Common myeloid progenitor, CD34-positive (primary cell): ENCODE measurements at regions of chr1 and their contacts with region 1.

Region 1: DNA sequence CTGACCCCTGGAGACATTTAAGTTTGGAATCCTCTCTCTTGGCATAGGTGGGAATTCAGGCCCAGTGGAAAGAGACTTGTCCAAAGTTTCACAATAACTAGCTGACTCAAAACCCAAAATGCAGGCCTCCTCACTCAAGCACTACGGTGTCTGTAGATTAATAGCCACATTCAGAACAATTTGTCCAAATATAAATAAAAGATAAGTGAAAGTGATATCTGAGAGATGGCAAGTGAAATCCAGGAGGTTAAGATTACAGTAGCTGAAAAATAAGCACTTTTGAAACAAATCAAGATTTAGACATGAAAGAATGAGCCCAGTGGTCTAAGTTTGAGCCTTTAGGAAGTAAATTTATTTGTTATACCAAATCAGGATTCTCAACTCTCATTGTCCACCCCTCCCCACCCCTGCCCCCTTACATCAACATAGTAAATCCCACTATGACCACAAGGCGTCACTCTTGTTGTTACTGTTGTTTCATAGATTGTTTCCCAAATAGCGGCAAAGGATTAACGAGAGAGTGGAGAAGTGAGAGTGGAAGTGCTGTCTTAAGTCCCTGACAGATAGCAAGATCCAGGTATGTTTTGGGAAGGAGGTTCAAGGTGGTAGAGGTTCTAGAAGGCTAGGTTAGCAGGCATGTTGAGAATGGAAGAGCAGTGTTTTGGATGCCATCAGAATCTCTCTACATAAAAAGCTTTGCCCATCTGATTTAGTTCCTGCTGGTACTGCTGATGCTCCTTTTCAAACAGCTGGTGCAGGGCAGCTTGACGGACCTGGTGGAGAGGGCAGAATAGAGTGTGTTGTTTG is 7.1 kb upstream of the TPM3 start:
- DNase-seq: peak; percentile 73 to 84 (median 83)
- H3K4me3 ChIP-seq: peak overlapping the region in 4 of 7 experiments; percentile 16 to 61 (median 28)
- H3K27ac ChIP-seq: no peak overlapping the region
- H3K4me1 ChIP-seq: peaks cover 2 to 12% (median 7%) of the 10 kb centered on the region in 4 experiments
- H3K27me3 ChIP-seq: no peaks in the 10 kb centered on the region

Region 2: GRCh38 chr1:153968951-153969350 is 230.0 kb before region 1 on chr1:
- CTCF ChIA-PET with region 1: no interaction called
- POLR2A ChIA-PET with region 1: no interaction called
- DNase-seq: no peak
- H3K4me3 ChIP-seq: peak overlapping the region in 6 of 7 experiments; percentile 85 to 97 (median 86)
- H3K27ac ChIP-seq: peak overlapping the region in 1 of 2 experiments; percentile 46
- H3K4me1 ChIP-seq: peaks cover 4 to 52% (median 40%) of the 10 kb centered on the region in 4 experiments
- H3K27me3 ChIP-seq: no peaks in the 10 kb centered on the region

Region 3: DNA sequence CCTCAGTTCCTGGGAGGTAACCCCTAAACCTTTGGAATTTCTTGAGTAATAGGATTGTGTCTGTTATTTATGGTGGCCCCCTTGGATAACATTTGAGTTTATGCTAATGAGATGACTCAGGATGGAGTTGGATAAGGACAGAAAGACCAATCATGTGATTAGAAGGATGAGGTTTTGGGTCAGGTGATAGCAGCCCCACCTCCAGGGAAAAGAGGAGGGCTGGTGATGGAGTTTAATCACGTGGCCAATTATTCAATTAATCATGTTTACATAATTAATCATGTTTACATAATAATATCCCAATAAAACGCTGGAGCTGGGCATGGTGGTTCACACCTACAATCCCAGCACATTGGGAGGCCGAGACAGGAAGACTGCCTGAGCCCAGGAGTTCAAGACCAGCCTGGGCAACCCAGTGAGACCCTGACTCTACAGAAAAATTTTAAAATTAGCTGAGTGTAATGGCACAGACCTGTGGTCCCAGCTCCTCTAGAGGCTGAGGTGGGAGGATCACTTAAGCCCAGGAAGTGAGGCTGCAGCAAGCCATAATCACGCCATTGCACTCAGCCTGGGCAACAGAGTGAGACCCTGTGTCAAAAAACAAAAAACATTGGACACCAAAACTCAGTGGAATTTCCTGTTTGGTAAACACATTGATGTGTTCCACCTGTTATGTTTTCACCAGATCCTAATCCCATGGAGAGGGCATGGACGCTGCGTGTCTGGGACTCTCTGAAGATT is 117.4 kb before region 1 on chr1:
- CTCF ChIA-PET with region 1: no interaction called
- POLR2A ChIA-PET with region 1: no interaction called
- DNase-seq: no peak
- H3K4me3 ChIP-seq: no peak overlapping the region
- H3K27ac ChIP-seq: no peak overlapping the region
- H3K4me1 ChIP-seq: no peaks in the 10 kb centered on the region
- H3K27me3 ChIP-seq: no peaks in the 10 kb centered on the region

Region 4: DNA sequence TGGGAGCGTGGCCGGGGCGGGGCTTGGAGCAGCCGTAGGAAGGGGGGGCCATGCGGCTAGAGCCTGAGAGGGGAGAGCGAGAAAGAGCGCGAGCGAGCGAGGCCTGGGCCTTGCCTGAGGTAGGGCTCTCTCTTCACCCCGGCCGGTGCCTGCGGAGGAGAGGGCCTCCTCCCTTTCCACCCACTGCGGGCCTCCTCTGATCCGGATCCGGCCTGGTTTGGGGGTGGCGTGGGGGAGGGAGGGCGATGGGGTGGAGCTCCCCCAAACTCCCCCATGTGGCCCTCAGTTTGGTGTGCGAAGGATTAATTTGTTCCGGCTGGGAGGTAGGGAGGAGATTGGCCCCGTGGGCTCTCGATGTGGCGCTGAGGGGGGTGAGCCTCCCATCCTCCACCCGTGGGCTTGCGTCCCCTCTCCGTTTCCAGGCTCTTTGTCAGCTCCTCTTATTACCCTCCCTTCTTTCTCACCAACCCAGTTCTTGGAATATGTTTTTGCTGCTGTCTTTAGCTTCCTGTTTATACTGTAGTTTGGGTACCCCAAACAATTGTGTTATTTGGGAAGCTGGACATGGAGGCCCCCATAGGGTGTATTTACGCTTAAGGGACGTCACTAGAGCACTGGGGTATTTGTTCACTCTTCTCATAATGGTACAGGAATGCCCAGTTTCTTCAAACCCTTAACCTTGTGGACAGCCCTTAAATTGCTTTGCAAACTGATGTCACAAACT is 22.5 kb after region 1 on chr1:
- CTCF ChIA-PET with region 1: interaction called, 14 read pairs
- POLR2A ChIA-PET with region 1: no interaction called
- DNase-seq: peak; percentile 79 to 83 (median 82)
- H3K4me3 ChIP-seq: peak overlapping the region; percentile 29 to 100 (median 94)
- H3K27ac ChIP-seq: peak overlapping the region; percentile 99
- H3K4me1 ChIP-seq: peaks cover 28 to 42% (median 33%) of the 10 kb centered on the region in 4 experiments
- H3K27me3 ChIP-seq: no peaks in the 10 kb centered on the region

Region 5: DNA sequence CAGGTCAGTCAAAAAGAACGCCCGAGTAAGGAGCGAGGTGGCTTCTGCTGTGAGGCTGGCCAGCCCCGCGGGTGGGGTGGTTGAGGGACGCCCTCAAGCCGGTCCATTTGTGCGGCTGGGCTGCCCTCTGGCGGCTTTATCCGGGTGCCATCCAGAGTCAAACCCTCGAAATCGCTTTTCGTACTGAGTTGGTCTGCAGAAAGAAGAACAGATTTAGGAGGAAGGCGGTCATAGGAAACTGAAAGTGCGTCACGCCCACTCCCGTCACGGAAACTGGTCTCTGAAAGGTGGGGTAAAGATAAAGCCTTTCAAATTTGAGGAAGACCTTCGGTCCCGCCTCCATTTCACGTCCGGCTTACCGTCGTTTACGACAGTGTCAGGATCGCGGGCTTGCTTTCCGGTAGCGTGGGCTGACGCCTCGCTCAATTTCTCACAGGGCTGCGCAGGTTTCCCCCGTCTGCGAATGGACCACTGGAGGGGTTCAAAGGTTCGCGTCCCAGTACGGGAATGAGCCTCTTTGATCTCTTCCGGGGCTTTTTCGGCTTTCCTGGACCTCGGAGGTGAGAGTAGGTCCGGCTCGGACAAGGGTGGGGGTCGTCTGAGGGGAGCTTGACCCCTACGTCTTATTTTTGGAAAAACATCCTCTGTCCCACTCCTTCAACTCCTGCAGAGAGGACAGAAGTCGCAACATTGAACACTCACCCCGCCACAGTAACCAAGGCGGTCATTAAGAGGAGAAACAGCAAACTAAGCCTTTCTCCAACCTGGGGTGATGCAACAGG is 73.4 kb after region 1 on chr1 and contains the start of gene HAX1:
- CTCF ChIA-PET with region 1: interaction called, 28 read pairs
- POLR2A ChIA-PET with region 1: interaction called, 3 read pairs
- DNase-seq: peak; percentile 100
- H3K4me3 ChIP-seq: peak within 1 kb of the TSS; percentile 89 to 100 (median 96)
- H3K27ac ChIP-seq: peak within 1 kb of the TSS; percentile 87 to 93
- H3K4me1 ChIP-seq: peaks cover 0 to 19% (median 17%) of the 10 kb centered on the region in 4 experiments
- H3K27me3 ChIP-seq: no peaks in the 10 kb centered on the region